ENCODE measurements at regions of chr9 and their contacts with region 1.

Region 1: DNA sequence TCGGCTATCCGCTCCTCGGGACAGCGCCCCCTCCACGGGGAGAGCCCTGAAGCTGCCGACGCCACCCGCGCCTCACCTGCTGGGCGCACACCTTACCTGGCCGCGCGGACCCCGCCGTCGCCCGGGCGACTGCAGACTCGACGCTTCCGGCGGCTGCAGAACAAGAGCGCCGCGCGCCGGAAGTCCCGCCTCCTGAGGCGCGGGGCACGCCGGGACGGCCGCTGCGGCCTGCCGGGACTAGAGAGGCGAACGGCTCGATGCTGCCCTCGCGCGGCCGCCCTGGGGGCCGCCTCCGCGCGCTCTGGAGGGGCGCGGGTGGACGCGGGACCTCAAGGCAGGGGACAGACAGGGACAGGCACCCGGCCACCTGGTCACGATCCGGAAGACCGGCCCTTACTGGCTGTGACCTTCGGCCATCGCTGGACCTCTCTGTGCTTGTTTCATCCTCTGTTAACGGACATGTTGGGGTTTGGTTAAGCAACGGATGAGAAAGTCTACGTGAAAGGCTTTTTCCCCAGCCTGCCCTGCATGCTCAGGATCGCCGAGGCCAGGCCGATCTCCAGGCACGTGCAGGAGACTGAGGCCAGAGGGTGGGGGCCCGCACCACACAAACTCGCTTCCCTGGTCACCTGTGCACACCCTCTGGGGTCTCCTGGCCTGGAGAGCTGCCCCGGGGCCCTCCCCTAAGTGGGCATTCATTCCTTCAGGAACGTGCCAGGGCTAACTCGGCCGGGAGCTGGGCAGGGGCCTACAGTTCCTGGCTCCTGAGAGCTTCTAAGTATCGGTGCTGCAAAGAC is at the start of gene SNAPC4:
- DNase-seq: no peak
- H3K4me3 ChIP-seq: peak within 1 kb of the TSS; percentile 83
- CTCF ChIP-seq: peak; percentile 80

Region 2: GRCh38 chr9:136138566-136138965 is 261.7 kb before region 1 on chr9:
- CTCF ChIA-PET with region 1: no interaction called
- POLR2A ChIA-PET with region 1: no interaction called
- DNase-seq: no peak
- H3K4me3 ChIP-seq: no peak overlapping the region
- CTCF ChIP-seq: peak; percentile 16

Region 3: GRCh38 chr9:136363606-136364370 is 36.4 kb before region 1 on chr9 and contains the start of gene DNLZ:
- CTCF ChIA-PET with region 1: interaction called, 54 read pairs
- POLR2A ChIA-PET with region 1: no interaction called
- DNase-seq: no peak
- H3K4me3 ChIP-seq: peak within 1 kb of the TSS; percentile 77
- CTCF ChIP-seq: peak; percentile 93

Region 4: DNA sequence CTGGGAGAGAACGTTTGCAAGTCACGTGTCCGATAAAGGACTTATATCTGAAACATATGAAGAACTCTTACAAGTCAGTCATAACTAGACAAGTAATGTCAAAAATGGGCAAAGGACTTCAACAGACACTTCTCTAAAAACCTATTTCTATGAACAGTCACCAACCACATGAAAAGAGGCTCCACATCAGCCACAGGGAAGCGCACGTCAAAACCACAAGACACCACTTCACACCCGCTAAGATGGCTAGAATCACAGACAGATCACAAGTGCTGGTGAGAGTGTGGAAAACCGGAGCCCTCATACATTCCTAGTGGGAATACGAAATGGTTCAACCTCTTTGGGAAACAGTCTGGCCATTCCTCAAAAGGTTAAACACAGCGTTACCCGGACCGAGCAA is 15.2 kb before region 1 on chr9:
- CTCF ChIA-PET with region 1: interaction called, 18 read pairs
- POLR2A ChIA-PET with region 1: no interaction called
- DNase-seq: no peak
- H3K4me3 ChIP-seq: no peak overlapping the region
- CTCF ChIP-seq: no peak

Region 5: DNA sequence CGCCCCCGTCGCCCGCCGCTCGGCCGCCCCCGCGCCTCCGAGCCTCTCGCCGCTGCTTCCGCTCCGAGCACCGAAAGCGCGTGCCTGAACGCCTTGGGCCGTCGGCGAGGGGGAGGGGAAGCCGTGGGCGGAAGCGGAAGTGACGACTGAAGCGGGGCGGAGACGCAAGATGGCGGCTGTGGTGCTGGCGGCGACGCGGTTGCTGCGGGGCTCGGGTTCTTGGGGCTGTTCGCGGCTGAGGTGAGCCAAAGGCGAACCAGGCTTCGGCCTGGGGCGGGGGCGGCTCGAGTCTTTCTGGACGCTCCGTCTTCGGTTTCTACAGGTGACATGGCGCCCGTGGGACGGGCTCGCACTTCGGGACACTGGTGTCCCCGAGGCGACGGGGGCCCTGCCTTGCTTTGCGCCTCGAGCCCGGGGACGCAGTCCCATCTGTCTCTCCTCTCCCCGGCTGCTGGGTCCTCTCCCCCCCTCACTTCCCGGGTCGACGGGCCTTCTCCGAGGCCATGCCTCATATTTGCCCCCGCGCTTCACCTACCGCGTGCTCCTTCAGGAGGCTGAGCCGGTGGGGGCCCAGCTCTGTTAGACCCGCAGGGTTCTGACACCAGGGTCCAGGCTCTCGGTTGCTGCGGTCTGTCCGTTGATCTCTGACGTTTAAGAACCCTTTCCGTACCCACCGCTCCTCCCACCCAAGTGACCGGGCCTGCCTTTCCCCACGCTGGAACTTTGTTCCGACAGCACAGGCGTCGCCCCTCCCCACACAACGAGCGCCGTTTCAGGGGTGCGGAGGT is 10.5 kb after region 1 on chr9 and contains the starts of genes ENTR1 and PMPCA:
- CTCF ChIA-PET with region 1: interaction called, 41 read pairs
- POLR2A ChIA-PET with region 1: interaction called, 6 read pairs
- DNase-seq: peak; percentile 10
- H3K4me3 ChIP-seq: peak within 1 kb of the TSS; percentile 95
- CTCF ChIP-seq: no peak